ENCODE measurements at regions of chr19 and their contacts with region 1.

Region 1: GRCh38 chr19:19033426-19034203 is at the starts of genes ARMC6 and SUGP2:
- DNase-seq: peak; percentile 85
- H3K4me3 Mint-ChIP-seq: peak within 1 kb of the TSS; percentile 95
- H3K27ac Mint-ChIP-seq: peak within 1 kb of the TSS; percentile 86
- H3K4me1 Mint-ChIP-seq: peaks cover 37% of the 10 kb centered on the region
- H3K27me3 Mint-ChIP-seq: no peaks in the 10 kb centered on the region
- total RNA-seq, gene ARMC6: 24.2 to 24.6 TPM
- total RNA-seq, gene SUGP2: 149 to 154 TPM

Region 2: DNA sequence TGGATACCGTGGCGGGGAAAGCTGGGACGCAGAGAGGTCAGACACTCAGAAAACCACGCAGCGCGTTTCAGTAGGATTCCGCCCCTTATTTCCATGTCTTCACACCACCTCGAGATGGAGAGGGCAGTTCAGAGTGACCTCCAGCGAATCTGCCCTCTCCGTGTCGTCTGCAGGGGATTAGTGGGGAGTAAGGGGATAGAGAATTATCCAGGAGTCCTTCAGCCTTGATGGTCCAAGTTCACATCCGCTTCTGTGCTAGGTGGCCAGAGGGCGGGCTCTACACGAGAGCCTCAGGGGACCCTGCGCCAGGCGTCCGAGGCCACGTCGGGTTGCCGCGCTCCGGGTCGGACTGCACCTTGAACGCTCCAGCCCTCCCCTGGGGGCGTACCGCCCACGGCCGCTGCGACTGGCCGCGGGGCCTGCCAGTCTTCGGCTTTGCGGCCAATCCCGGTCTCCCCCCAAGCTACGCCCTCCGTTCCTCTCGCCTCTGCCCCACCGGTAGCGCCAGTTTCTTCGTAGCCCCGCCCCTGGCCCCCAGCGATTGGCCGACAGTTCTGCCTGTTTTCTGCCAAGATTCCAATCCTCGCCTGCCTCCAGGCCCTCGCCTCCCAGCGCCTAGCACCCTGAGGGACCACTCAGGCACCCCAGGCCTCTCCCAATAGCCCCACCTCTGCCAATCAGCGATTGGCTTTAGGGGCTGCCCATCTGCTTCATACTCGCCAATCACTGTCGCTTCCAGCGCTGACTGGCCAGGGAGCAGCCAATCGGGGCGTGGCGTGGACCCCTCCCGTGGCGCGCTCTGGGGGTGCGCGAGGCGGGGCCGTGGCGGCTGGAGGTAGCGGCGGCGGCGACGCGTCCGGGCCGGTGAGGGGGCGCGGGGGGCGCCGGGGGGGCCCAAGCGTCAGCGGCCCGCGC is 29.8 kb after region 1 on chr19 and contains the start of gene SLC25A42:
- CTCF ChIA-PET with region 1: interaction called, 3 read pairs
- intact Hi-C with region 1: loop called (anchors 1 kb)
- DNase-seq: peak; percentile 99
- H3K4me3 Mint-ChIP-seq: peak within 1 kb of the TSS; percentile 85
- H3K27ac Mint-ChIP-seq: peak within 1 kb of the TSS; percentile 83
- H3K4me1 Mint-ChIP-seq: peaks cover 41% of the 10 kb centered on the region
- H3K27me3 Mint-ChIP-seq: no peaks in the 10 kb centered on the region
- total RNA-seq, gene SLC25A42: 6.7 to 8.5 TPM

Region 3: GRCh38 chr19:19259741-19260140 is 226.1 kb after region 1 on chr19:
- CTCF ChIA-PET with region 1: no interaction called
- intact Hi-C with region 1: no loop called
- DNase-seq: no peak
- H3K4me3 Mint-ChIP-seq: no peak overlapping the region
- H3K27ac Mint-ChIP-seq: no peak overlapping the region
- H3K4me1 Mint-ChIP-seq: peaks cover 9% of the 10 kb centered on the region
- H3K27me3 Mint-ChIP-seq: peaks cover 56% of the 10 kb centered on the region